ENCODE measurements at regions of chr11 and their contacts with region 1.

Region 1: GRCh38 chr11:130087294-130087926 is 17.7 kb downstream of the APLP2 start:
- DNase-seq: no peak
- H3K4me3 ChIP-seq: no peak overlapping the region
- CTCF ChIP-seq: no peak
- POLR2A ChIP-seq: no peak

Region 2: GRCh38 chr11:131041331-131042040 is 954.1 kb after region 1 on chr11:
- intact Hi-C with region 1: loop called (anchors 5 kb)
- DNase-seq: no peak
- H3K4me3 ChIP-seq: no peak overlapping the region
- CTCF ChIP-seq: no peak
- POLR2A ChIP-seq: no peak